OCI-LY7 (cell line): ENCODE measurements at regions of chr7 and their contacts with region 1.

Region 1: DNA sequence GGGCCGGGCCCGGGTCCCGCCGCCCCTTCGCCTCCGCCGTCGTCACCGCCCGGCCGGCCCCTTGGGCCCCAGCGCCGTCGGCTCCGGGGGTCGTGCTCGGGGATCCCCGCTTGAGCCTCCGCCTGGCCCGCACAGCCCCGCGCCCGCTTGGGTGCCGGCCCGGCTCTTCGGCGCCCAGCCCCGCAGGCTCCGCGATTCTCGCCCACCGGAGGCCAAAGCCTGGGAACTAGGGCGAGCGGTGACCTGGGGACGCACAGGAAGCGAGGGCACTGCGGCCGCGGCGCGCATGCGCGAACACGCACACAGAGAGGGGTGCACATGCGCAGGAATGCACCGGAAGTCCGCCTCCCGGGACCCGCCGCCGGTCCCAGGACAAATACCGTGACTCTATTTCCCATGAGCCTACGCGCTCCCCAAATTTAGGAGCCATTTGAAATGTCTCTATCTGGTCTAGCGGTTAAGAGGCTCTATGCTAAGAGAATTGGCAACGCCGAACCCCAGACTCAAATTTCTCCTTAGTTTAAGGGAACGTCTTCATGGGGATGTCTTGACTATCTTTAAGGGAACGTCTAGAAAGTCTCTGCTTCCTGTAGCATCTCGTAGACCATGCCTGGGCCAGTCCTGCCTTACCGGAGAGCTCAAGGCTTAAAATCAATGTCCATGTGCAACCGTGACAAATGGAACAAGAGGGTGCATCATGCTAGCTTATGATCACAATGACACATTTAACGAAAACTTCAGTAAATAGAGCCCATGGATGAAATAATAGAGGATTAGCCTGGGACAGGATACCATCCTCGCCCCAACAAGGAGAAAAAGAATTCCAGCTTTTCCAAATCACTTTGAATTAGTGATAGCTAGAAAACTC is at the start of gene ZNF12:
- DNase-seq: peak; percentile 97
- H3K4me3 ChIP-seq: peak within 1 kb of the TSS; percentile 98
- H3K27ac ChIP-seq: peak within 1 kb of the TSS; percentile 67
- H3K4me1 ChIP-seq: peaks cover 23% of the 10 kb centered on the region
- CTCF ChIP-seq: no peak
- total RNA-seq, gene ZNF12: 15.4 and 16.7 TPM in 2 replicates

Region 2: DNA sequence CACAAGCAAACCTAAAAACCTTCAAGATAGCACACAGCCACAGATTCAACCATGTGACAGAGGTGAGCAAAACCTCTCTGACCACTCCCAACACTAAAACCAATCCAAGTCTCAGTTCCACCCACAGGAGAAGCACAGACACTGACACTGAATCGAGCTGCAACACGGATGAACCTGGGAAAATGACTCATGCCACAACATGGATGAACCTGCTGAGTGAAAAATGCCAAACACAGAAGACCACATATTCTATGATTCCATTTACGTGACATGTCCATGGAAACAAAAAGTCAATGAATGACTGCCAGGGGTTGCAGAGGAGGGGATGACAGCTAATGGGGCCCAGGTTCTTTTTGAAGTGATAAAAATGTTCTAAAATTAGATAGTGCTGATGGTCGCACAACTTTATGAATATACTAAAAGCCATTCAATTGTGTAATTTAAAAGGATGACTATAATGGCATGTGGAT is 456.5 kb before region 1 on chr7:
- CTCF ChIA-PET with region 1: no interaction called
- POLR2A ChIA-PET with region 1: no interaction called
- intact Hi-C with region 1: no loop called
- DNase-seq: no peak
- H3K4me3 ChIP-seq: no peak overlapping the region
- H3K27ac ChIP-seq: no peak overlapping the region
- H3K4me1 ChIP-seq: no peaks in the 10 kb centered on the region
- CTCF ChIP-seq: no peak

Region 3: GRCh38 chr7:6290319-6290741 is 416.6 kb before region 1 on chr7:
- CTCF ChIA-PET with region 1: no interaction called
- POLR2A ChIA-PET with region 1: no interaction called
- intact Hi-C with region 1: no loop called
- DNase-seq: no peak
- H3K4me3 ChIP-seq: no peak overlapping the region
- H3K27ac ChIP-seq: no peak overlapping the region
- H3K4me1 ChIP-seq: no peaks in the 10 kb centered on the region
- CTCF ChIP-seq: no peak

Region 4: GRCh38 chr7:6729492-6730342 is 22.8 kb after region 1 on chr7:
- CTCF ChIA-PET with region 1: no interaction called
- POLR2A ChIA-PET with region 1: no interaction called
- intact Hi-C with region 1: loop called (anchors 1 kb)
- DNase-seq: peak; percentile 97
- H3K4me3 ChIP-seq: peak overlapping the region; percentile 95
- H3K27ac ChIP-seq: peak overlapping the region; percentile 46
- H3K4me1 ChIP-seq: peaks cover 25% of the 10 kb centered on the region
- CTCF ChIP-seq: no peak